Posterior cingulate gyrus (tissue), 11 donors: ENCODE measurements at regions of chr10 and their contacts with region 1.

Region 1: DNA sequence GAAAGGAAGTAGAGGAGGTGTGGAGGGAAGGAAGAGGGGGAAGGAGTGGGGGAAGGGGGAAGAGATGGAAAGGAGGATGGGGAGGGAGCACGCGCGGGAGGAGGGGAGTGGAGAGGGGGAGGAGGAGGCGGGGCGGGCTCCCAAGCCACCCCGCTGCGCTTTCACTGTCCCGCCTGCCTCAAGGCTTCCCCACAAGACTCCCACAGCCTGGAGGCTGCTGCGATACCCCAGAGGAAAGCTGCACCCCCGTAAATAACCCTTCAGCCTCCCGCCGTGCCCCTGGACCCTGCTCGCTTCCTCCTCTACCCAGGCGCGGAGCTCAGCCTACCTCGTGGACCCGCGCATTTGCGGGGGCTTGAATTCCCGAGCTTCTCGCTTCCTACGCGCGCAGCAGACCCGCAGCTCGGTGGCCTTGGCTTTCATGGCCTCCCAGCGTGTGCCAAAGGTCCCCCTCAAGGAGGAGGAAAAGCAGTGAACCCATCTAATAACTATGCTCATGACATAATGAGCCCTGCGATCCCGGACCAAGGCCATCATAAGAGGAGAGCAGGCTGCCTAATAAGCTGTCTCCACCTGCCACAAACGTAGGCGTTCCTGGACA is at the start of gene C10orf67:
- DNase-seq: peak; percentile 28 to 92 (median 54)

Region 2: DNA sequence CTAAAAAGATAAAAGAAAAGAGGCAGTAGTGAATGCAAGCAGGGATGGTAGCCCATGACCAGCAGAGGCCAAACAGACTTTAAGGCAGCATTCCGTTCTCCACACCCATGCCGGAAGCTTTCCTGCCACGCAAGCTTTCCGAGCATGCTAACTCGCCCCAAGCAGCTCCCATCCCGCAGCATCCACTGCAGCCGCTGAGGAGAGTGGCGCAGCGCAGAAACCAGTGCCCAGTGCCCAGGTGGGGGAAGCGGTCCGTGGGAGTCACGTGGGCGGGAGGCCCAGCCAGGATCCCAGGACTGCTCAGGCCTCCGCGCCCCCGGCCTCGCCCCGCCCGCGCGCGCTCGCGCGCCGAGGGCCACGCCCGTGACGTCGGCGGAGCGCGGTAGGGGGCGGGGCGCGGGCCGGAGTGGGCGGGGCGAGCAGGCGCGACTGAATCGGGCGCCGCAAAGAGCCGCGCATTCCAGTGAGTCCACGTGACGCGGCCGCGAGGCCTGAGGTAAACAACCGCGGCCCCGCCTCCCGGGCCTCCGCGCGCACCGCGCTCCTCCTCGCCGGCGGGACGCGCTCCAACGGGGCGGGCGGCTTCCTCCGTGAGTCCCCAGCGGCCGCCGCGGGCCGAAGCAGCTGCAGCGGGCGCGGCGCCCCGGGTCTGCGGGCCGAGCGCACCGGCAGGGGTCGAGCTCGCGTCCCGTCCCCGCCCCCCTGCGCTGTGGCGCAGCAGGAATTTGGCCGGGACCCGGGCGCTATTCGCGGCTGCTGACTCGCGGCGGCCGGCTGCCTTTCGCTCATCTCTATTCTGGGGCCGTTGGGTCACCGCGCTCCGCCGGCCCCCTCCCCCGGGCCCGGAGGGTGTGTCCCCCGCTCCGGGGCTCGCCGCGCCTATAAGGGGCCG is 94.5 kb after region 1 on chr10 and contains the start of gene OTUD1:
- intact Hi-C with region 1: loop called (anchors 2 kb)
- DNase-seq: peak; percentile 92 to 99 (median 95)